H1 (cell line): ENCODE measurements at regions of chr11 and their contacts with region 1.

Region 1: DNA sequence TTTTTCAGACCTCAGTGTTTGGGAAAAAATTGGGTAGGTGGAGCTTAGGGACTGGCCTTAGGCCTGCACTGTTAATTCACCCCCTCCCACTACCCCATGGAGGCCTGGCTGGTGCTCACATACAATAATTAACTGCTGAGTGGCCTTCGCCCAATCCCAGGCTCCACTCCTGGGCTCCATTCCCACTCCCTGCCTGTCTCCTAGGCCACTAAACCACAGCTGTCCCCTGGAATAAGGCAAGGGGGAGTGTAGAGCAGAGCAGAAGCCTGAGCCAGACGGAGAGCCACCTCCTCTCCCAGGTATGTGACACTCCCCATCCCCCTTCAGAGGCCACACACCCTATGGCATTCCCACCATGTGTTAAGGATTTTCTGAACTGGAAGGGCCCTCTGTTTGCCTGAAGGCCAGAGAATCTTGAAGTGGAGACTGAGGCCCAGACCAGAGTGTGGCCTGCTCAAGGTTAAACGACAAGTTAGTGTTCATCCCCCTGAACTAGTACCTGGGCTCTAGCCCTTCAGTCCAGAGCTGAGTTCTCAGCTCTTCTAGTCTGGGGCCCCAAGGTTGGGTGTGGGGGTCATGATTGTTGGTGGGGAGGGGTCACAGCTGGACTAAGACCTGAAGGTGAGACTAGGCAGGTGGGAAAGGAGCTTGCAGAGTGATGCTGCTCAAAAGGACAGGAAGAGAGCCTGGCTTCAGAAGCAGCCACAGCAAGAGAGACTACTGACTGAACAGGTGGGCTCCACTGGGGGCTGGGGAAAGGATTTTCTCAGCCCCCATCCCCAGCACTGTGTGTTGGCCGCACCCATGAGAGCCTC is 2.3 kb upstream of the FOLR1 start:
- DNase-seq: no peak
- H3K4me3 ChIP-seq: no peak overlapping the region
- H3K27ac ChIP-seq: no peak overlapping the region
- H3K4me1 ChIP-seq: peaks cover 0 to 3% (median 0%) of the 10 kb centered on the region in 4 experiments; a peak in 1 of 7 replicates
- H3K27me3 ChIP-seq: no peaks in the 10 kb centered on the region
- CTCF ChIP-seq: no peak
- EP300 ChIP-seq: no peak
- POLR2A ChIP-seq: no peak
- RAD21 ChIP-seq: no peak

Region 2: DNA sequence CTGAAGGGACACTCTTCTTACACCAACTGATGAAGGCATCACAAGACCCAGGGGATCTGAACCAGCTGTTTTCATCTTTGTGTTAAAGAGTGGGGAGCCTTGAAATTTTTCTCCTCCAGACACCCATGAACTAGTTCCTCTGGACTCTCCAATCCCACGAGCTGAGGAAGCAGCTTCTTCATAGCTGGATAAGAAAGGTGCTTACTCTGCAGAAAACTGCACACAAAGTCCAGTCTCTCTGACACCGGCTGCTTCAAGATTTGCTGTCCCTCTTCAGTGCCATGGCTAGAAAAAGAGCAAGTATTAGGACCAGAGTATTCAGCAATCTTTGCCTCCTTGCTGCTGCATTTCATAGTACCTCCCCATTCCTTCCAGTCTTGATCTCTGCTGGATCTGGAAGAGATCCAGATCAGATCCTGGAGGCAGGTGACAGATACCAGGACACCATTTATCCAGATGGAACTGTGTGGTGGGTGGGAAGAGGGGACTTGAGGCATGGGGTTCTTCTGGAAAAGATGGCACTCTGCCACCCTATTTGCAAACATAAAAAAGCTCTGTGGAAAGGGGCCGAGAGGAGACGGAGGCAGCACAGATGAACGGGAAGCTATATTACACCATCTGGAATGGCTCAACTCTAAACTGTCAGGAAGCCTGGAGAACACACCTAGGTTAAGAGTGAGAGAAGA is 165.5 kb before region 1 on chr11:
- CTCF ChIA-PET with region 1: interaction called, 20 read pairs
- POLR2A ChIA-PET with region 1: no interaction called
- DNase-seq: no peak
- H3K4me3 ChIP-seq: no peak overlapping the region
- H3K27ac ChIP-seq: peak overlapping the region; percentile 26; the same call in 1 of the 2 replicates
- H3K4me1 ChIP-seq: no peaks in the 10 kb centered on the region
- H3K27me3 ChIP-seq: no peaks in the 10 kb centered on the region
- CTCF ChIP-seq: no peak
- EP300 ChIP-seq: no peak
- POLR2A ChIP-seq: no peak
- RAD21 ChIP-seq: no peak

Region 3: DNA sequence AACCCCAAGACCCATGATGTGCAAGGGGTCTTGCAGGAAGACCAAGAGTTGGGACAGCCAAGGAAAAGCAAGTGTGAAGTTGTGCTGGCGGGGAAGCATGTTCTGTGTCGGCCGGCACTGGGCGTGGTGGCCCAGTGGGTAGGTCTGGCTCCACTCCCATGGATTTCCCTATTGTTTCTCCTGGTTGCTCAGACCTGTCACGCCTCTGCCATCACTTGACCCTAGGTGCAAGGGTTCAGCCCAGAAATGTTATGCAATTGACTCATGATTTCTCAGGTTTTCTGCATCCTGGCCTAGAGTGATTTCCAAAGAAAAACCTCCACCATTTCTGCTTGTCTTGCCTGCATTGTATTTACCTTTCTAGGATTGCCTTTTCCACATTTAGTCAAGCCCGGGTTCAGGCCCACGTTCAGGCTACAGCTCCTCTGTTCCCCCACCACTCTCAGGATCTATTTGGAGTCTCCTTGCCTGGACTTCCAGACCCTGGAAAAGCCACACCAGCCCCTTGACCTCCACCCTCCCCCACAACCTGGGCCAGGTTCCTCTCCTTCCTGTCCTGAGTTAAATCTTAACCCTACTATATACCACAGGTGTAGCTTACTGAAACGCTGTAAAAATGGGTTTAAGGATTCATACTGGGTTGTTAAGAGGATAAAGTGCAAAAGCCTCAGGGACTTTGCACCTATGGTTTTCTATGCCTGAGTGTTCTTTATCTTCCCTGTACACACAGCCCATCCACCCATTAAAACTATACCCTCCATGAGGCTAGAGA is 15.2 kb before region 1 on chr11:
- CTCF ChIA-PET with region 1: interaction called, 29 read pairs
- POLR2A ChIA-PET with region 1: no interaction called
- DNase-seq: no peak
- H3K4me3 ChIP-seq: no peak overlapping the region
- H3K27ac ChIP-seq: no peak overlapping the region
- H3K4me1 ChIP-seq: no peaks in the 10 kb centered on the region
- H3K27me3 ChIP-seq: no peaks in the 10 kb centered on the region
- CTCF ChIP-seq: no peak
- EP300 ChIP-seq: no peak
- POLR2A ChIP-seq: no peak
- RAD21 ChIP-seq: no peak

Region 4: GRCh38 chr11:72208281-72208680 is 18.6 kb after region 1 on chr11:
- CTCF ChIA-PET with region 1: interaction called, 19 read pairs
- POLR2A ChIA-PET with region 1: no interaction called
- DNase-seq: no peak
- H3K4me3 ChIP-seq: no peak overlapping the region
- H3K27ac ChIP-seq: no peak overlapping the region
- H3K4me1 ChIP-seq: no peaks in the 10 kb centered on the region
- H3K27me3 ChIP-seq: no peaks in the 10 kb centered on the region
- CTCF ChIP-seq: no peak
- EP300 ChIP-seq: no peak
- POLR2A ChIP-seq: no peak
- RAD21 ChIP-seq: no peak

Region 5: GRCh38 chr11:72238040-72238450 is 48.4 kb after region 1 on chr11:
- CTCF ChIA-PET with region 1: interaction called, 16 read pairs
- POLR2A ChIA-PET with region 1: no interaction called
- DNase-seq: peak; percentile 85 to 92
- H3K4me3 ChIP-seq: peak overlapping the region in 3 of 4 experiments; percentile 9 to 60 (median 34); a peak in 4 of 8 replicates
- H3K27ac ChIP-seq: 0 out of 2 replicates have a peak overlapping the region, but pooled peaks have one; percentile 6
- H3K4me1 ChIP-seq: peaks cover 3 to 29% (median 23%) of the 10 kb centered on the region in 4 experiments
- H3K27me3 ChIP-seq: peaks cover 36 to 47% (median 44%) of the 10 kb centered on the region in 4 experiments
- CTCF ChIP-seq: peak; percentile 88 to 95 (median 92)
- EP300 ChIP-seq: peak in 1 of 2 experiments; percentile 56; a peak in 1 of 3 replicates
- POLR2A ChIP-seq: no peak
- RAD21 ChIP-seq: peak; percentile 74 to 81